Keratinocyte (primary cell): ENCODE measurements at regions of chr4 and their contacts with region 1.

Region 1: GRCh38 chr4:57190601-57191481 is 80.7 kb upstream of the IGFBP7 start:
- DNase-seq: peak; percentile 17
- H3K4me3 ChIP-seq: no peak overlapping the region
- H3K27ac ChIP-seq: no peak overlapping the region
- H3K4me1 ChIP-seq: peaks cover 13% of the 10 kb centered on the region
- H3K27me3 ChIP-seq: no peaks in the 10 kb centered on the region
- CTCF ChIP-seq: peak; percentile 65 to 88 (median 78)

Region 2: GRCh38 chr4:57124145-57124544 is 66.7 kb before region 1 on chr4:
- dilution Hi-C with region 1: loop called (anchors 5 kb)
- DNase-seq: no peak
- H3K4me3 ChIP-seq: no peak overlapping the region
- H3K27ac ChIP-seq: no peak overlapping the region
- H3K4me1 ChIP-seq: peaks cover 7% of the 10 kb centered on the region
- H3K27me3 ChIP-seq: no peaks in the 10 kb centered on the region
- CTCF ChIP-seq: no peak